ENCODE measurements at regions of chr14 and their contacts with region 1.

Region 1: DNA sequence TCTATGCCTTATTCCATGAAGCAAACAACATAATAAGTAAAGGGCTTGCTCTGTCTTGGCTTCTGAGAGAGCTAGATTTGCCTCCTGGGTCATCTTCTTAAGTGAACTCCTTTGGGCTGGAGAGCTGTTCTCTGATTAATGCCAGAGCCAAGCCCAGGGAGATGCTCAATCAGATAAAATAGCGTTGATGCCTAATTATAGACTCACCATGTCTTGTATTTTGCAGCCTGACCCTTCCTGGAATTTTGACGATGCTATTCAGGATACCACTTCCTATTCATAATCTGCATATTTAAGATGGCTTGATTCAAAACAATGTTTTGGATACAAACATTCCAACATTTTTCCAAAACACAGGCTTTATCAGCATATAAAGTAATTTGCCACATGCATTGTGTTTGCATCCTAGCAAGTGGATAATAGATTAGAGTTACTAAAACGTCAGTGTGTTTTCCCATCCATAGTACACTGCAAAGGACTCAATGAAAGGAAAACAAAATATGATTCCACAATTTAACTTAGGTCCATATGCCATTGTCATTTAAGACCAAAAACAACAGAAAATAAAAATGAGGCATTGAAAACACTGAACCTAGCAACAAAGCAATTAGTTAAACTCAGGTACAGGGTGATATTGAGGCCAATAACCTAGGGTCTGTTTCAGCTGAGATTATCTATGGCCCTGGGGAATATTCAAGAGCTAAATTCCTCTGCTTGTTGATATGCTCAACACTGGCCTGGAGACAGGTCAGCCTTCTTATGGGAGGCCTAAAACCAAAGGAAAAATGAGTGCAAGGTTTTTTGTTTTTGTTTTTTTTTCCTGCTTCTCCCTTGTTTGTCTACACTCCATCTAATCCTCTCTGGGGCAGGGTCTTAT is 184.2 kb upstream of the FOXN3 start:
- DNase-seq: no peak
- H3K4me3 ChIP-seq: no peak overlapping the region
- H3K27ac ChIP-seq: no peak overlapping the region
- H3K4me1 ChIP-seq: no peaks in the 10 kb centered on the region
- H3K27me3 ChIP-seq: no peaks in the 10 kb centered on the region
- CTCF ChIP-seq: no peak
- EP300 ChIP-seq: no peak
- POLR2A ChIP-seq: no peak

Region 2: GRCh38 chr14:89406941-89407340 is 194.2 kb before region 1 on chr14:
- in situ Hi-C with region 1: no loop called
- intact Hi-C with region 1: no loop called
- DNase-seq: no peak
- H3K4me3 ChIP-seq: no peak overlapping the region
- H3K27ac ChIP-seq: peak overlapping the region in 2 of 4 donors; percentile 11 to 38
- H3K4me1 ChIP-seq: peaks cover 3 to 48% (median 9%) of the 10 kb centered on the region in 4 donors
- H3K27me3 ChIP-seq: no peaks in the 10 kb centered on the region
- CTCF ChIP-seq: no peak
- EP300 ChIP-seq: no peak
- POLR2A ChIP-seq: no peak

Region 3: GRCh38 chr14:89657014-89657413 is 55.8 kb after region 1 on chr14:
- in situ Hi-C with region 1: no loop called
- intact Hi-C with region 1: loop called (anchors 2 kb)
- DNase-seq: no peak
- H3K4me3 ChIP-seq: no peak overlapping the region
- H3K27ac ChIP-seq: no peak overlapping the region
- H3K4me1 ChIP-seq: peaks cover 0 to 13% (median 4%) of the 10 kb centered on the region in 4 donors
- H3K27me3 ChIP-seq: no peaks in the 10 kb centered on the region
- CTCF ChIP-seq: no peak
- EP300 ChIP-seq: no peak
- POLR2A ChIP-seq: no peak

Measured in transverse colon (tissue), 4 donors.